ENCODE measurements at regions of chr15 and their contacts with region 1.

Region 1: DNA sequence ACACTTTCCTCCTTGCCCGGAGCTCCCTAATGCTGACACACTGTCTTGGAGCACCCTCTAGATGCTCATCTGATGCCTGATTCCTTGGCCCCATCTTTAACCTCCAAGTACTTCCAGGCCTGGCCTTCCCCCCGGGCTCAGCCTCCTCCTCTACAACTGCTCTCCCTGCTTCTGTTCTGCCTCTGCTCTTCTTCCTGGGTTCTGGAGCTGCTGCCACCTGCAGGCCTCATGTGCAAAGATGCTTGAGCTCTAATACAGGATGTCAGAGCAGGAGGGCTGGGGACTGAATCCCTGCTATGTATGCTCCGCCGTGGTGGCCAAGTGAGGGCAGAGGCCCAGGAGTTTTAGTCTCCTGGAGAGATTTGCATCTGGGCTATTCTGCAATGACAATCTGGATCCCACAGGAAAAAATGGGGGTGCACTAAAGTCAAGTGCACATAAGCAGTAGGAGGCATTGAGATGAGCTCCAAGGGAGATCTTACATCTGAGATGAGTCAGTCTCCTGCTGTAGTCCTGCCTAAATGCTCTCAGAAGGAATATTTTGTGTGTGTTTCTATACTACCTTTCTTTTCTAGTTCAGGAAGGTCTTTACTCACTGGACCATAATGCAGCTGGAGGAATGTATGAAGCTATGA is 296.3 kb downstream of the UACA start:
- DNase-seq: peak; percentile 54
- ATAC-seq: peak; percentile 92
- H3K4me3 Mint-ChIP-seq: no peak overlapping the region
- H3K27ac Mint-ChIP-seq: no peak overlapping the region
- H3K4me1 Mint-ChIP-seq: 0 out of 2 replicates have a peak, but pooled peaks cover 2% of the 10 kb centered on the region
- H3K27me3 Mint-ChIP-seq: no peaks in the 10 kb centered on the region
- CTCF ChIP-seq: peak; percentile 29; the same call in 1 of the 2 replicates

Region 2: DNA sequence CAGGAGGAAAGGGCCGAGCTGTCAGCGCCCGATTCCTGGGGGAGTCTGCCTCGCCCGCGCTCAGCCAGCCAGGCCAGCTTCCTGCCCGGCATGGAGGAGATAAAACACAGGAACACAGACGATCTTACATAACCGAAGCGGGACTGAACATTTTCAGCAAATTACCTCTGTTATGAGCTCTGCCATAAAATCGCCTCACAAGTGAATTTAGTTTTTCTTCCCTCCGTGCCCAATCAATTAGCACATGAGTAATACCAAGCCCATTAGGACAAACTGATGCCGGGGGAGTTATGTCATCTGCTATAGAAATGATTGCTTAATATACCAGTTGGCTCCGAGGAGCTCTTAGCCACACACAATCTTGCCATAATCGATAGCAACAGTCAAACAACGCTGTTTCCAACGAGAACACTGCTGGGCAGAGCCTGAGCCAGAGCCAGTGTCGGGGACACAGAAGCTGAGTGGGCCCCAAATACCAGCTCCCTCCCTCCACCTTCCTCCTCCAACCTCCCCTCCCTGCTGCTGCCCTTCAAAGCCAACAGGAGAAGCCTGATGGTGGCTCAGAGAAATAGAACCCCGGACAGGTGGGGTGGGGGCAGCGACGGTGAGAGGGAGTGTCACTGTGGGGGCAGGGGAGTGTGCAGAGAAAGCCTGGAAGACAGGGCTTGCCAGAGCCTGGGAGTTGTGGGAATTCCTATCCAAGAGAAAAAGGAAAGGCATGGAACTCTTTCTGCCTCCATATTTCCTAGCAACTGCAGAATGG is 89.9 kb before region 1 on chr15:
- CTCF ChIA-PET with region 1: interaction called, 14 read pairs
- POLR2A ChIA-PET with region 1: no interaction called
- DNase-seq: no peak
- ATAC-seq: peak; percentile 46
- H3K4me3 Mint-ChIP-seq: peak overlapping the region; percentile 80
- H3K27ac Mint-ChIP-seq: no peak overlapping the region
- H3K4me1 Mint-ChIP-seq: peaks cover 34% of the 10 kb centered on the region
- H3K27me3 Mint-ChIP-seq: peaks cover 7% of the 10 kb centered on the region; the same call in 1 of the 2 replicates
- CTCF ChIP-seq: no peak

Region 3: DNA sequence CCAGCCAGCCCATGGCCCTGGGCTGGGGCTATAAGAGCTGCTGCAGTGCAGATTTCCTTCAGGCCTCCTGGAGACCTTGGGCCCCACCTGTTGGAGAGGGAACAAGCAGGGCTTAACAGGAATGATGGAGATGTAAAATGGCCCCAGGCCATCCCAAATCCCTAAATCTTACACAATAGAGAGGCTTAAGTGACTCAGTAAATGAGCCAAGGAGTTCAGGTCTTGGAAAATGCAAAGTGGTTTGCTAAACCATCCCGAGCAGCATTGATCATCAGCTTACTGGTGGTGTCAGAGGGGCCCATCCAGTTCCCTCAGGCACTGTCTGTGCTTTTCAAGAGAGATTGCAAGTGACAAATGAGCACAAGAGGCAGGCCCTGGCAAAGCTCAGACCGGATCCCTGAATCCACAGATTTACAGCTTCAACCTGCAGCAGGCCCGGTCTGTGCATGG is 29.1 kb before region 1 on chr15:
- CTCF ChIA-PET with region 1: interaction called, 10 read pairs
- POLR2A ChIA-PET with region 1: no interaction called
- DNase-seq: no peak
- ATAC-seq: peak; percentile 89
- H3K4me3 Mint-ChIP-seq: no peak overlapping the region
- H3K27ac Mint-ChIP-seq: no peak overlapping the region
- H3K4me1 Mint-ChIP-seq: peaks cover 32% of the 10 kb centered on the region
- H3K27me3 Mint-ChIP-seq: peaks cover 10% of the 10 kb centered on the region
- CTCF ChIP-seq: no peak

Region 4: GRCh38 chr15:70451821-70452653 is 15.0 kb before region 1 on chr15:
- CTCF ChIA-PET with region 1: interaction called, 12 read pairs
- POLR2A ChIA-PET with region 1: no interaction called
- DNase-seq: peak; percentile 76
- ATAC-seq: peak; percentile 84
- H3K4me3 Mint-ChIP-seq: peak overlapping the region; percentile 51
- H3K27ac Mint-ChIP-seq: no peak overlapping the region
- H3K4me1 Mint-ChIP-seq: peaks cover 25% of the 10 kb centered on the region
- H3K27me3 Mint-ChIP-seq: peaks cover 19% of the 10 kb centered on the region
- CTCF ChIP-seq: no peak

Region 5: GRCh38 chr15:70488002-70488605 is 21.1 kb after region 1 on chr15:
- CTCF ChIA-PET with region 1: interaction called, 15 read pairs
- POLR2A ChIA-PET with region 1: no interaction called
- DNase-seq: peak; percentile 80
- ATAC-seq: peak; percentile 81
- H3K4me3 Mint-ChIP-seq: no peak overlapping the region
- H3K27ac Mint-ChIP-seq: no peak overlapping the region
- H3K4me1 Mint-ChIP-seq: no peaks in the 10 kb centered on the region
- H3K27me3 Mint-ChIP-seq: no peaks in the 10 kb centered on the region
- CTCF ChIP-seq: peak; percentile 94

Region 6: GRCh38 chr15:70775160-70775559 is 308.1 kb after region 1 on chr15:
- CTCF ChIA-PET with region 1: no interaction called
- POLR2A ChIA-PET with region 1: no interaction called
- DNase-seq: no peak
- ATAC-seq: no peak
- H3K4me3 Mint-ChIP-seq: no peak overlapping the region
- H3K27ac Mint-ChIP-seq: no peak overlapping the region
- H3K4me1 Mint-ChIP-seq: no peaks in the 10 kb centered on the region
- H3K27me3 Mint-ChIP-seq: no peaks in the 10 kb centered on the region; the same call in 1 of the 2 replicates
- CTCF ChIP-seq: no peak

Measured in WTC11 (cell line).